Activated T-helper 1 cell treated with anti-CD3 and anti-CD28 coated beads, Interleukin-12 subunit alpha, Interleukin-12 subunit beta, Interleukin-2, Interleukin-4 antibody, amounts not matched to agents 30 ng/mL and 10 ng/mL and 1 ng/mL, durations not matched to agents 14 hours and 24 hours and 36 hours (primary cell): ENCODE measurements at regions of chr7 and their contacts with region 1.

Region 1: DNA sequence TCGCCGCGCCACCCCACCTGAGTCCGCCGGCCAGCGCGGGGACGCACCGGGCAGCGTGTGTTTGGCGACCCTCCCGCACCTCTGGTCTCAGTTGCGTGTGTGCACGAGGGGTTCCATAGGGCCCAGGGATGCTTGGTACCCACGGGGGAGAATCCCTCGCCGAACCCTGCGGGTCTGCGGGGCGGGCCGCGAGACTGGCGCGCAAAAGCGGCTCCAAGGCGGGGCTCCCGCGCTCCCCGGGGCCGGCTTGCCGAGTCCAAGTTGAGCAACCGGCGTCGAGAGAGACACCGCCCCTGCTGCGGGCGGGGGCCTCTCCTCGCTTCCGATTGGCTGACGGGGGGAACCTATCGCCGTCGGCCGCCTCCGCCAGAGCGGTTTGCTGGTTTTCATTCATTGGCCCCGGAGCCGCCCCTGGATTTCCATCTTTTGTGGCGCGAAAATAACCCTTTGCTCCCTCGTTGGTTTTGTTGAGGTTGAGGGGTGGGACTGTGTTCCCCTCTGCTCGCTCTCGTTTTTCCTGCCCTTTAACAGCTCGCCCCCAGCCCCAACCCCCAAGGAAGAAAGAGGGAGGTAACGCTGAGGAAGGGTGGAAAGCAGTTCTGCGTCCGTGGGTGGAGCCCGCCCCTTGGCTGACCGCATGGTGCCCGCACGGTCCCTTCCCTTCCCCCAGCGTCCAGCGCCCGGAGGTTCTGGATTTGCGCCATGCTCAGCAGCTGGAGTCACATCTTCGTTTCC is 4.0 kb upstream of the IGF2BP3 start:
- DNase-seq: peak; percentile 89
- H3K4me3 Mint-ChIP-seq: peak overlapping the region; percentile 83
- H3K27ac Mint-ChIP-seq: peak overlapping the region; percentile 57
- H3K4me1 Mint-ChIP-seq: peaks cover 39% of the 10 kb centered on the region
- H3K27me3 Mint-ChIP-seq: peaks cover 63% of the 10 kb centered on the region

Region 2: GRCh38 chr7:22822486-22823141 is 651.6 kb before region 1 on chr7 and contains the start of gene TOMM7:
- intact Hi-C with region 1: loop called (anchors 10 kb)
- DNase-seq: peak; percentile 81
- H3K4me3 Mint-ChIP-seq: peak within 1 kb of the TSS; percentile 98
- H3K27ac Mint-ChIP-seq: peak within 1 kb of the TSS; percentile 93
- H3K4me1 Mint-ChIP-seq: peaks cover 41% of the 10 kb centered on the region
- H3K27me3 Mint-ChIP-seq: peaks cover 17% of the 10 kb centered on the region
- total RNA-seq, gene TOMM7: 187 and 225 TPM in 2 replicates

Region 3: GRCh38 chr7:23298885-23299769 is 175.1 kb before region 1 on chr7 and contains the start of gene MALSU1:
- intact Hi-C with region 1: loop called (anchors 1 kb)
- DNase-seq: peak; percentile 93
- H3K4me3 Mint-ChIP-seq: peak within 1 kb of the TSS; percentile 88
- H3K27ac Mint-ChIP-seq: peak within 1 kb of the TSS; percentile 88
- H3K4me1 Mint-ChIP-seq: peaks cover 38% of the 10 kb centered on the region
- H3K27me3 Mint-ChIP-seq: peaks cover 4% of the 10 kb centered on the region
- total RNA-seq, gene MALSU1: 92.3 and 92.8 TPM in 2 replicates

Region 4: GRCh38 chr7:23490357-23491135 is 16.3 kb after region 1 on chr7:
- intact Hi-C with region 1: loop called (anchors 1 kb)
- DNase-seq: peak; percentile 38
- H3K4me3 Mint-ChIP-seq: peak overlapping the region; percentile 84
- H3K27ac Mint-ChIP-seq: peak overlapping the region; percentile 82
- H3K4me1 Mint-ChIP-seq: peaks cover 4% of the 10 kb centered on the region
- H3K27me3 Mint-ChIP-seq: no peaks in the 10 kb centered on the region

Region 5: GRCh38 chr7:23679898-23680413 is 205.7 kb after region 1 on chr7 and contains the start of gene FAM221A:
- intact Hi-C with region 1: no loop called
- DNase-seq: peak; percentile 70
- H3K4me3 Mint-ChIP-seq: peak within 1 kb of the TSS; percentile 88
- H3K27ac Mint-ChIP-seq: peak within 1 kb of the TSS; percentile 72
- H3K4me1 Mint-ChIP-seq: peaks cover 12% of the 10 kb centered on the region
- H3K27me3 Mint-ChIP-seq: peaks cover 18% of the 10 kb centered on the region
- total RNA-seq, gene FAM221A: 9.4 and 9.9 TPM in 2 replicates

Region 6: GRCh38 chr7:23742051-23742450 is 267.8 kb after region 1 on chr7:
- intact Hi-C with region 1: no loop called
- DNase-seq: no peak
- H3K4me3 Mint-ChIP-seq: no peak overlapping the region
- H3K27ac Mint-ChIP-seq: no peak overlapping the region
- H3K4me1 Mint-ChIP-seq: no peaks in the 10 kb centered on the region
- H3K27me3 Mint-ChIP-seq: no peaks in the 10 kb centered on the region